ENCODE measurements at regions of chr2 and their contacts with region 1.

Region 1: DNA sequence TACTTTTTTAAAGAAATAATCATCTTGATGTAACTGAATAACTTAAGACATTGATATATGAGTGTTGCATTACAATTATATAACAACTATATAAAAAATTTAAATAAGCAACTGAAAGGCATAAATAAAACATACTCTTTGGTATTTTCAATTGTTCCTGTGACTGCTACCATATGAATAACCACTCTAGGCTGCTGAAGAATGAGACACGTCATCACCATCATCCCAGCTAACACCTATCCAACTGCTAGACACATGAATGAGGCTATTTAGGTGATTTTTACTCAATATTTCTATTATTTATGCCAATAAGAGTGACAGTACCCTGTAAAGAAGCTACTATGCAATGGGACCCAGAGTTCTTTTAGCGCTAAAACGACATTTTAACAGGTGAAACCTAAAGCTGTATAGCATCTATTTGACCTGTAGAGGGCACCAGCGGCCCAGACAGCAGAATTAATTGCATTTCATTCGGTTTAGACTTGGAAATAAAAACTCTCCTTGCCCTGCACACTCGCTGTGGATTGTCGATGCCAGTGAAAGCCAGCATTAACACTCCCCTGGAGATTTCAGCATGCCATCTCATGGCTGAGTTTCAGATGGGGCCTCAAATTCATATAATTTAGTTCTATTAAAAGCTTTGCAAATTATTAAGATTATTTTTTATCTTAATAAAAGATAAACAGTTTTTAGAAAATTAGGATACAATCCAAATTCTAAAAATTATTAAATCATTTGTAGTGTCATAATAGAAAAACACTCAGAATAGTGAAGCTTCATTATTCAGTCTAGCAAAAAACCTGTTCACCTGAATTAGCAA is 89.4 kb upstream of the MAP2 start:
- DNase-seq: peak; percentile 39 to 61
- H3K4me3 ChIP-seq: no peak overlapping the region
- H3K4me3 Mint-ChIP-seq: no peak overlapping the region
- H3K27ac Mint-ChIP-seq: no peak overlapping the region
- H3K4me1 ChIP-seq: no peaks in the 10 kb centered on the region
- H3K4me1 Mint-ChIP-seq: no peaks in the 10 kb centered on the region
- H3K27me3 ChIP-seq: no peaks in the 10 kb centered on the region
- H3K27me3 Mint-ChIP-seq: no peaks in the 10 kb centered on the region
- CTCF ChIP-seq: peak; percentile 79 to 84

Region 2: GRCh38 chr2:208820014-208820688 is 514.3 kb before region 1 on chr2:
- CTCF ChIA-PET with region 1: no interaction called
- POLR2A ChIA-PET with region 1: no interaction called
- intact Hi-C with region 1: loop called (anchors 2 kb)
- DNase-seq: peak in 1 of 2 experiments; percentile 13
- H3K4me3 ChIP-seq: no peak overlapping the region
- H3K4me3 Mint-ChIP-seq: no peak overlapping the region
- H3K27ac Mint-ChIP-seq: no peak overlapping the region
- H3K4me1 ChIP-seq: no peaks in the 10 kb centered on the region
- H3K4me1 Mint-ChIP-seq: no peaks in the 10 kb centered on the region
- H3K27me3 ChIP-seq: no peaks in the 10 kb centered on the region
- H3K27me3 Mint-ChIP-seq: no peaks in the 10 kb centered on the region
- CTCF ChIP-seq: peak; percentile 27 to 39

Region 3: DNA sequence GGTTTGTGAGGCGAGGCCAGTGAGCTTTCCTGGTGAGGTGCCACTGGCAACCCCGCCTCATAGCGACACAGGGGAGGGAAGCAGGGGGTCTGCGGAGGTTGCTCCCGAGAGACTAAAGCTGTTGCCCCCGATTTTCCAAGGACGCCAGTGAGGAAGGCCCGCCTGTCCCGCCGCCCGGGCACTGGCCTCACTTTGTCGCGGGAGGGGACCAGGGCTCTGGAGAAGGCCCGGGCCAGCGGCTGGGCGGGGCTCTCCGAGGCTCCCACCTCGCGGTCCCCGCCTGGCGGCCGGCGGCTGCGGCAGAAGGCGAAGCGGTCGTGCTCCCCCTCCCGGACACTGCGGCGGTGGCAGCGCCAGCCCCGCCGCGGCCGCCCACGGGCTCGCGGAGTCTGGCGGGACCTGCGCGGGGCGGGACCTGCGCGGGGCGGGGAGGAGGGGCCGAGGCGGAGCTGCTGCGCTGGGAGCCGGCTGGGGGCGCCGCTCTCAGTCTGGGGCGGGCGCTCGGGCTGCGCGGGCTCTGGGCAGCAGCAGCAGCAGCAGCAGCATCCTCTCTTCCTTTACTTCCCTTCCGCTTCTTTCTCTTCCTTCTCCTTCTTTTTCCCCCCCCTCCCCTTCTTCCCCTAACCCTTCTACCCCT is 89.3 kb after region 1 on chr2 and contains the start of gene MAP2:
- CTCF ChIA-PET with region 1: interaction called, 12 read pairs
- POLR2A ChIA-PET with region 1: no interaction called
- intact Hi-C with region 1: loop called (anchors 1 kb)
- DNase-seq: peak; percentile 75 to 91
- H3K4me3 ChIP-seq: peak within 1 kb of the TSS; percentile 36
- H3K4me3 Mint-ChIP-seq: peak within 1 kb of the TSS; percentile 79
- H3K27ac Mint-ChIP-seq: no peak within 1 kb of the TSS
- H3K4me1 ChIP-seq: peaks cover 6% of the 10 kb centered on the region
- H3K4me1 Mint-ChIP-seq: peaks cover 8% of the 10 kb centered on the region
- H3K27me3 ChIP-seq: no peaks in the 10 kb centered on the region
- H3K27me3 Mint-ChIP-seq: peaks cover 7% of the 10 kb centered on the region
- CTCF ChIP-seq: peak; percentile 83 to 93
- total RNA-seq, gene MAP2: 0.05 TPM in 1 of 2 replicates, not detected in the other

Region 4: DNA sequence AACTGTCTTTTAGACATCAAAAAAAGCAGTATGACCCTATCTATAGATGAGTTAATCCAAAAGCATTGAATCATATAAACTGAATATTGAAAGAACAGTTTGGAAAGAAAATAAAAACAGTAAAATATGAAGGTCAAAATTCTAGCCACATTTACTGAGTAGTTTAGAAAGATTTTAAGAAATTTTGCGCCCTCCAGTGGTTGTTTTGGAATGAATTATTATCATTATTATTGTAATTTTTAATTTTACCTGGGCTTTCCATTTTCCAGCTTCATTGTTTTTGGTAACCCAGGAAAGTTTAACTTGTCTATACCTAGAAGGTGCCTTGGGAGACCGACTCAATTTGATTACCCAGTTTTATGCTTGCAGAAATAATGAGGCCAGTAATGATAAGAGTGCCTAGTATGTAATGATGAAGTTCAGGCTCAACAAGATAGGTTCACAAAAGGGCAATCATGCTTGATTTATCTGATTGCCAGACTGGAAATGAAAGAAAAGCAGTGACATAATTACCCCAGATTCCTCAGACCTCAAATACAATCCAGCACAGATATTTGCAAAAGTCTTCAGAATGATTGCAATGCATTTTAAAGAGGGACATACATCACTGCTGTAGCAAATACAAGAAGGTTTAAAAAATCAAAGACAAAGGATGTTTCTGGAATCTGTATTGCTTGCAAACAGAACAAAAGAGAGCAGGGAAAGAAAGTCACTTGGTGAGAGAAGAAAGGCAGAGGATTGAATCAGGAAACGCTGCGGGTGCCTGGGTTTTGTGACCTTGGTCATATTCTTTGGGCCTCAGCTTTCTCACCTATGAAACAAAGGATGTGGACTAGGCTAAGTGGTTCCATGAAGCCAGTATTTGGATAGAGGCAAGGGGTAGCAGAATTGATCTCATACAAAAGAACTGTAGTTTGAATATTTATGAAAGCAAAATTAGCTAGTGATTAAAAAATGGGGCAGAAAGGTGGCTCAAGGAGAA is 243.3 kb after region 1 on chr2:
- CTCF ChIA-PET with region 1: interaction called, 5 read pairs
- POLR2A ChIA-PET with region 1: no interaction called
- intact Hi-C with region 1: loop called (anchors 1 kb)
- DNase-seq: no peak
- H3K4me3 ChIP-seq: no peak overlapping the region
- H3K4me3 Mint-ChIP-seq: no peak overlapping the region
- H3K27ac Mint-ChIP-seq: no peak overlapping the region
- H3K4me1 ChIP-seq: no peaks in the 10 kb centered on the region
- H3K4me1 Mint-ChIP-seq: no peaks in the 10 kb centered on the region
- H3K27me3 ChIP-seq: no peaks in the 10 kb centered on the region
- H3K27me3 Mint-ChIP-seq: peaks cover 4% of the 10 kb centered on the region
- CTCF ChIP-seq: peak in 1 of 2 experiments; percentile 2

Region 5: DNA sequence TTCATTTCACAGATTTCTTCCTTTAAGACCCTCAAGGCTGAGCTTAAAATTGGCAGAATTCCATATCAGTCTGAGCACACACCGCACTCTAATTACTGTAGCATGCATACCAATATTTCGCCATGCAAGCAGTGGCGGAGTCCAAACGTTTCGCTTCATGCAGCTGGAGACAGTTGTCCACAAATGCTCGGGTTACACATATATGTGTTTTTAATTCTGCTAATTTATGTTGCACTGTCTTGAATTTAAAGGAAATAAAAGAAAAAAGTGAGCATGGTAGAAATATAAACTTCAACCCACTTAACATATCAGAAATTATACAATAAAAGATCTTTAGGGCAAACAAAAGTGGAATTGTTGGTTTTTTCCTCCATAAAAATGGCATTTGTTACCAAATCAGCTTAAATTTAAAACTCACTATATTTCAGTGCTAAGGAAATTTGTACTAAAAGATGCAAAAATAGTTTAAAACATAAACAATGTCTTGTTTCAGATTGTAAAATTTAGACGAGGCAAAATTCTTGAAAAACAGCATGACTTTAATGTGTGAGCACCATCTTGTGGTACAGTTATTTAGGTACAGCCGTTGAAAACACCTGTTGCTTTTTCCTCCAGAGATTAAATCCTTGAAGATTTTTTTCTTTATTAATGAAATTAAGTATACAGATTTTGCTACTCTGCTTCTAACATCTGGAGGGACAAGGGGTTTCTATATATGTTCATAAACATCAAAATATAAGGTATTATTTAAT is 860.9 kb after region 1 on chr2:
- CTCF ChIA-PET with region 1: no interaction called
- POLR2A ChIA-PET with region 1: no interaction called
- intact Hi-C with region 1: loop called (anchors 5 kb)
- DNase-seq: peak in 1 of 2 experiments; percentile 17
- H3K4me3 ChIP-seq: no peak overlapping the region
- H3K4me3 Mint-ChIP-seq: no peak overlapping the region
- H3K27ac Mint-ChIP-seq: no peak overlapping the region
- H3K4me1 ChIP-seq: peaks cover 3% of the 10 kb centered on the region
- H3K4me1 Mint-ChIP-seq: no peaks in the 10 kb centered on the region
- H3K27me3 ChIP-seq: no peaks in the 10 kb centered on the region
- H3K27me3 Mint-ChIP-seq: no peaks in the 10 kb centered on the region
- CTCF ChIP-seq: peak; percentile 61 to 66

Measured in Caco-2 (cell line).